AG04449 (cell line): ENCODE measurements at regions of chr2 and their contacts with region 1.

Region 1: DNA sequence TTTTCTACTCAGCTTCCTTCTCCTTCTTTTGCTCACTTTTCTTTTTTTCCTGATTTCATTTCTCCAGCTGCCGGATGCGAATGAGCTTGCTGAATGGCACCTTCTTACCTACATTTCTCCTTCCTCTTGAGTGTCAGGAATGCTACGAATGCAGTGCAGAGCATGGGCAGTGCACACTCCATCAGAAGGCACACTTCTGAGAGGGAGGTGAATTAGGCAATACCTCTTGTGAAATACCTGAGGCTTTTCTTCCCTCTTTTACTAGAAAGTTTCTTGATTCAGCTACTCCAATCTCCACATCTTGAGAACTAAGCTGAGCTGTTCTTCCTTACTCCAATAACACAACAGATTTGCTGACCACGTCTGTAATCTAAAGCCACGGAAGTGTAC is 51.1 kb downstream of the PLEKHM3 start:
- DNase-seq: no peak
- H3K4me3 ChIP-seq: no peak overlapping the region
- CTCF ChIP-seq: no peak

Region 2: DNA sequence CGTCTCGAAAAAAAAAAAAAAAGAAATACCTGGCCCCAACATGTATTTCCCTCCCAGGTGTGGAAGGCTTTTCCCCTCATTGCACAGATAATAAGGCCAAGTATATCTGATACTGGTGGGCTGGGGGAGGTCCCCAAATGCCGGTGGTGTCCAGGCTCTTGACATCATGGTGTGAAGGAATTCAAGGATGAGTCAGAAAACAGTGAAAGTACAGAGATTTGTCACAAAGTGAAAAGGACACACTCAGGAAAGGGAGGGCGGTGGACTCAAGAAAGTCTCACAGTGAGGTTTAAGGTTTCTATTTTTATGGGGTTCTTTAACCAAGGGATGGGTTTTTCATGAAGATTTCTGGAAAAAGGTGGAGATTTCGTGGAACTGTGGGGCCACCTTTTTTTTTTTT is 166.7 kb before region 1 on chr2:
- CTCF ChIA-PET with region 1: no interaction called
- POLR2A ChIA-PET with region 1: no interaction called
- DNase-seq: no peak
- H3K4me3 ChIP-seq: no peak overlapping the region
- CTCF ChIP-seq: no peak

Region 3: DNA sequence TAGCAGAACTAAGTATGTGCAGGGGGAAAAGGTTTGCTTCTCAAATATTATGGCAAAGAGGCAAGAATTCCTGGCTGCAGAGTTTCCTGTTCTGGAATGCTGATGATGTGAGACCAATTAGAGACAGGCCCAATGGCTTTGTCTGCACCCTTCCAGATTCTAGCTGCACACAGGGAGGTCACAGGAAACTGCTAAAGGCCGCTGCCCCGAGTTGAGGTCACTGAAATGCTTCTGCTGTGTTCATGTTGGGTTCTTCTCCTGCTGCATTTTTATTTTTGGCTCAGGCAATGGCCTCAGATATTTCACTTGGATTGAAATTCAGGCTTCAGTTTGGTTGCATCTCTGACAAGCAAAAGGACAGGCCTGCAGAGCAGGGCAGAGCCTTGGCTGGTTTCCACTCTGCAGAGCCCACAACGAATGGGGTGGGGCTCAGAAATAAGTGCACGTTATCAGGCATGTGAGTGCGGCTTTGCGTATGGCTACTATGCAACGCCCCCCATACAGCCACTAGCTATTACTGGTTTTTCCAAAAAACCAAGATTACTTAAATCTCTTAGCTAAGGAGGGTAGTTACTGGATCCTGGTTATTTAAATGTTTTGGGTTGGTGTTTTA is 137.6 kb before region 1 on chr2:
- CTCF ChIA-PET with region 1: no interaction called
- POLR2A ChIA-PET with region 1: no interaction called
- DNase-seq: no peak
- H3K4me3 ChIP-seq: no peak overlapping the region
- CTCF ChIP-seq: no peak

Region 4: DNA sequence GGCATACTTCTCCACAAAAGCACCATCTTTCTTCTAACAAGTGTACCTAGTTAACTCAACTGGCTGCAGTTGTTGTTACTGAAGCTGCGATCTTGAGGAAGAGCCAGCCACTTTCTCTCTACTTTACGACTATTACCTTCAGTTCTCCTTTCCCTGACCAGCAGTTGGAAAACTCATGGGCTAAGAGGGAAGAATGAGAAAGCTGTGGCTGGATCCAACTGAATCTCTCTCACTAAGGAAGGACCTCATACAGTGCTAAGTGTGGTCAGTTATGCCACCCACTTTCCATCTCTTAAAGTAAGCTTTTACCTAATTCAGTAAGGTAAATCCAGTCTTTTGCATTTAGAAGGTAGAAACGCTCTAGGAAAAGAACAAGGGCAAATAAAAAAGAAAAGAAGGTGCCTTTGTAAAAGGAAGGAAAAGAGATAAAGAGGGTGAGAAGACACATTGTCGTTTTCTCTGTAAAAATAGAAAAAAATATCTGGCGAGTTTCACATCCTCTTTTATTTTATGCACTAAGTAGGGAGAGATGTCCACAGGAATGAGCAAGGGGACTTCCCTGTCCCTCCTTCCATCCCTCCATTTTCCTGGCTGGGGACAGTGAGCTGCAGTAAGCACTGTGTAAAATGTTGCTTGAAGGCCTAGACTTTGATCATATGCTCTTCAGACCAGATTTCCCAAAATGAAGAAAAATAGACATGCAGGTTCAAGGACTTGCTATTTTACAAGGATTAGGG is 22.3 kb before region 1 on chr2:
- CTCF ChIA-PET with region 1: interaction called, 10 read pairs
- POLR2A ChIA-PET with region 1: no interaction called
- DNase-seq: no peak
- H3K4me3 ChIP-seq: no peak overlapping the region
- CTCF ChIP-seq: no peak

Region 5: DNA sequence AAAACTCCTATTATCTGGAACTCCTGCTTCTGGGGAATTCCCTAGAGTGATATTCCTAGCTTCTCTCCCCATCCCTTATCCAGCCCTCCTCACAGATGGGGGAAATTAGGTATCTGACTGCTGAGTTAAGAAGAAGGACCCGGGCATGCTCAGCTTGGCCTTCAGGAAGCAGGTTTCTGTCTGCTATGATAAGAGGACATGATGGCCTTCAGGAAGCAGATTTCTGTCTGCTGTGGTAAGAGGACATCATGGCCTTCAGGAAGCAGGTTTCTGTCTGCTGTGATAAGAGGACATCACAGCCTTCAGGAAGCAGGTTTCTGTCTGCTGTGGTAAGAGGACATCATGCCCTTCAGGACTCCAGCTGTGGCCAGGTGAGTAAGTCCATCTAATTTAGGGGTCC is 14.1 kb before region 1 on chr2:
- CTCF ChIA-PET with region 1: interaction called, 10 read pairs
- POLR2A ChIA-PET with region 1: no interaction called
- DNase-seq: no peak
- H3K4me3 ChIP-seq: no peak overlapping the region
- CTCF ChIP-seq: no peak

Region 6: GRCh38 chr2:208017721-208018120 is 43.5 kb after region 1 on chr2:
- CTCF ChIA-PET with region 1: no interaction called
- POLR2A ChIA-PET with region 1: no interaction called
- DNase-seq: no peak
- H3K4me3 ChIP-seq: no peak overlapping the region
- CTCF ChIP-seq: no peak